CD4-positive, alpha-beta memory T cell (primary cell): ENCODE measurements at regions of chrX and their contacts with region 1.

Region 1: DNA sequence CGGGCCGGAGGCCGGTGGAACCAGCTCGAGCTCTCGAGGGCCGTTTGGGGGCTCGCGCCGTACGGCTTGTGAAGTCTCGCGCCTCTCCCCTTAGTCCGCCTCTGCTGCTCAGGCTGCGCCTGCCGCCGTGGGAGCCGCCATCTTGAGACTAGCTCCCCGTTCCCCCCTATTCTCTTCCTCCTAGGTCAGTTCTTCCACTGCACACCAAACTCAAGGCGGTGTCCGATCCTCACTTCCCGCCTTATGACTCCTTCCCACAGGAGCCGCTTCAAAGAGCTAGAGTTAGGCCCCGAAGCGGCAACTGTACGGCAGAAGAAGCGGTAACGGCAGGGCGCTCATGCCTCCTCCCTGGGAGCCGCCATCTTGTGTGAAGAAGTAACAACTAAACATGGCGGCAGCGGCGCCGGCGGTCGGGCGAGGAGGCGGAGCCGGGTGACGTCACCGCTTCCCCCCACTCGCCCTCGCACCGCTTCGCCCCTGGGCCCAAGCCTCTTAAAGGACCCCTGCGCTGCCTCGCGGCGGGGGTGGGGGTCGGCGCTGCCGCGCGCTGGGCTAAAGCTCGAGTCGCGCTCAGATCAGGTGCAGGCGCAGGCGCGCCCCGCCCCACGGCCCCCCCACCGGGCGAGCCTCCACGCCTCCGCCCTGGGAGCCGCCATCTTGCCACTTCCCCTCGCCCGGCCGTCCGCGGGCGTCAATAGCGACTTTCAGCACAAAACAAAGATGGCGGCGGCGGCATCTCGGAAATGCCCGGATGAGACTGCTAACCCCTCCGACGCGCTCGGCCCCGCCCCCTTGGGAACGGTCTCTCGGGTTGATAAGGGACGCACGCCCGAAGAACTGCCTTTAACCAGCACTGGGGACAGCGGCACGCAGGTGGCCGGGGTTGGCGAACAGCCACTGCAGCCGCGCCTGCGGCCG is at the start of gene HCFC1:
- DNase-seq: peak; percentile 93 to 98 (median 96)
- H3K4me3 ChIP-seq: peak within 1 kb of the TSS; percentile 61 to 90
- H3K4me3 Mint-ChIP-seq: peak within 1 kb of the TSS; percentile 100
- H3K27ac ChIP-seq: peak within 1 kb of the TSS; percentile 99
- H3K27ac Mint-ChIP-seq: peak within 1 kb of the TSS; percentile 97 to 100 (median 100)
- H3K4me1 ChIP-seq: peaks cover 41% of the 10 kb centered on the region
- H3K4me1 Mint-ChIP-seq: peaks cover 21 to 53% (median 41%) of the 10 kb centered on the region in 4 donors
- H3K27me3 ChIP-seq: no peaks in the 10 kb centered on the region
- H3K27me3 Mint-ChIP-seq: peaks cover 0 to 1% of the 10 kb centered on the region in 2 donors
- total RNA-seq, gene HCFC1: 52.6 to 53.4 TPM

Region 2: GRCh38 chrX:153319295-153320046 is 652.2 kb before region 1 on chrX:
- CTCF ChIA-PET with region 1: no interaction called
- POLR2A ChIA-PET with region 1: no interaction called
- intact Hi-C with region 1: no loop called
- DNase-seq: no peak
- H3K4me3 ChIP-seq: no peak overlapping the region
- H3K4me3 Mint-ChIP-seq: no peak overlapping the region
- H3K27ac ChIP-seq: no peak overlapping the region
- H3K27ac Mint-ChIP-seq: no peak overlapping the region
- H3K4me1 ChIP-seq: peaks cover 4% of the 10 kb centered on the region
- H3K4me1 Mint-ChIP-seq: peaks cover 3 to 7% (median 6%) of the 10 kb centered on the region in 4 donors
- H3K27me3 ChIP-seq: no peaks in the 10 kb centered on the region
- H3K27me3 Mint-ChIP-seq: peaks cover 0 to 1% of the 10 kb centered on the region in 2 donors

Region 3: GRCh38 chrX:153470435-153471363 is 501.0 kb before region 1 on chrX and contains the start of gene HAUS7:
- CTCF ChIA-PET with region 1: no interaction called
- POLR2A ChIA-PET with region 1: no interaction called
- intact Hi-C with region 1: no loop called
- DNase-seq: peak; percentile 84 to 89 (median 87)
- H3K4me3 ChIP-seq: peak within 1 kb of the TSS; percentile 42 to 69
- H3K4me3 Mint-ChIP-seq: peak within 1 kb of the TSS; percentile 80 to 87 (median 83)
- H3K27ac ChIP-seq: peak within 1 kb of the TSS; percentile 59
- H3K27ac Mint-ChIP-seq: peak within 1 kb of the TSS; percentile 59 to 89 (median 82)
- H3K4me1 ChIP-seq: peaks cover 31% of the 10 kb centered on the region
- H3K4me1 Mint-ChIP-seq: peaks cover 6 to 21% (median 15%) of the 10 kb centered on the region in 4 donors
- H3K27me3 ChIP-seq: no peaks in the 10 kb centered on the region
- H3K27me3 Mint-ChIP-seq: no peaks in the 10 kb centered on the region
- total RNA-seq, gene HAUS7: 29.8 to 33.8 TPM

Region 4: GRCh38 chrX:153927922-153928760 is 43.6 kb before region 1 on chrX:
- CTCF ChIA-PET with region 1: interaction called, 16 read pairs
- POLR2A ChIA-PET with region 1: interaction called, 176 read pairs
- intact Hi-C with region 1: loop called (anchors 1 kb)
- DNase-seq: peak; percentile 95 to 99 (median 97)
- H3K4me3 ChIP-seq: peak overlapping the region; percentile 17 to 72
- H3K4me3 Mint-ChIP-seq: peak overlapping the region; percentile 89 to 95 (median 92)
- H3K27ac ChIP-seq: peak overlapping the region; percentile 98
- H3K27ac Mint-ChIP-seq: peak overlapping the region; percentile 98 to 99 (median 99)
- H3K4me1 ChIP-seq: peaks cover 19% of the 10 kb centered on the region
- H3K4me1 Mint-ChIP-seq: peaks cover 6 to 66% (median 48%) of the 10 kb centered on the region in 4 donors
- H3K27me3 ChIP-seq: no peaks in the 10 kb centered on the region
- H3K27me3 Mint-ChIP-seq: no peaks in the 10 kb centered on the region

Region 5: GRCh38 chrX:153953342-153953830 is 18.3 kb before region 1 on chrX:
- CTCF ChIA-PET with region 1: interaction called, 31 read pairs
- POLR2A ChIA-PET with region 1: interaction called, 10 read pairs
- intact Hi-C with region 1: no loop called
- DNase-seq: peak; percentile 76 to 82 (median 78)
- H3K4me3 ChIP-seq: no peak overlapping the region
- H3K4me3 Mint-ChIP-seq: peak overlapping the region in 1 of 8 donors; percentile 43
- H3K27ac ChIP-seq: peak overlapping the region; percentile 31
- H3K27ac Mint-ChIP-seq: peak overlapping the region in 6 of 7 donors; percentile 57 to 84 (median 74)
- H3K4me1 ChIP-seq: peaks cover 4% of the 10 kb centered on the region
- H3K4me1 Mint-ChIP-seq: peaks cover 0 to 7% (median 2%) of the 10 kb centered on the region in 4 donors
- H3K27me3 ChIP-seq: no peaks in the 10 kb centered on the region
- H3K27me3 Mint-ChIP-seq: no peaks in the 10 kb centered on the region

Region 6: DNA sequence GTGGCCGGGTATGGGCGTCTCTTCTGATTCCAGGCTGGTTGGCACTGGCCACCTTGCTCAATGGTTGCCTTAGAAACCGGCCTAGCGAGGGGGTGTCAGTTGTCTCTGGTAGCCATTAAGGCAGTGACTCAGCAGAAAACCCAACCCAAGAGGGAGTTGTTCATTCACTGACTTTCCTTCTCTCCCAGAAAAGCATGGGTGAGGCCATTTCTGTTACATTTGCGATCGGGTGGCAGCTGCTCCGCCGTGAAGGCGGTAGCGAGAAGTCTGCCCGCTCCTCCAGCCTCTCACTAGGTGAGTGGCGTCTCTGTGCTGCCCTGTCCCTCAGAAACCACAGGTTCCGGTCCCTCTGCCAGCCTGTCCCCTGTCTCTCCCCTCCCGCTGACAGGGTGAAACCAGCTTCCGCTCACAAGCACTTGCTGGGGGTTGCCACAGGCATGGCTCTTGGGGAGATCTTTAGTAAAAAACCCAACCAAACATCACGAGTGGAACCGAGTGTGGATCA is 30.6 kb after region 1 on chrX:
- CTCF ChIA-PET with region 1: no interaction called
- POLR2A ChIA-PET with region 1: interaction called, 12 read pairs
- intact Hi-C with region 1: no loop called
- DNase-seq: peak; percentile 26 to 64 (median 39)
- H3K4me3 ChIP-seq: peak overlapping the region in 1 of 2 donors; percentile 40
- H3K4me3 Mint-ChIP-seq: peak overlapping the region; percentile 67 to 88 (median 79)
- H3K27ac ChIP-seq: no peak overlapping the region
- H3K27ac Mint-ChIP-seq: peak overlapping the region; percentile 43 to 92 (median 79)
- H3K4me1 ChIP-seq: peaks cover 15% of the 10 kb centered on the region
- H3K4me1 Mint-ChIP-seq: peaks cover 10 to 18% (median 13%) of the 10 kb centered on the region in 4 donors
- H3K27me3 ChIP-seq: no peaks in the 10 kb centered on the region
- H3K27me3 Mint-ChIP-seq: no peaks in the 10 kb centered on the region

Region 7: DNA sequence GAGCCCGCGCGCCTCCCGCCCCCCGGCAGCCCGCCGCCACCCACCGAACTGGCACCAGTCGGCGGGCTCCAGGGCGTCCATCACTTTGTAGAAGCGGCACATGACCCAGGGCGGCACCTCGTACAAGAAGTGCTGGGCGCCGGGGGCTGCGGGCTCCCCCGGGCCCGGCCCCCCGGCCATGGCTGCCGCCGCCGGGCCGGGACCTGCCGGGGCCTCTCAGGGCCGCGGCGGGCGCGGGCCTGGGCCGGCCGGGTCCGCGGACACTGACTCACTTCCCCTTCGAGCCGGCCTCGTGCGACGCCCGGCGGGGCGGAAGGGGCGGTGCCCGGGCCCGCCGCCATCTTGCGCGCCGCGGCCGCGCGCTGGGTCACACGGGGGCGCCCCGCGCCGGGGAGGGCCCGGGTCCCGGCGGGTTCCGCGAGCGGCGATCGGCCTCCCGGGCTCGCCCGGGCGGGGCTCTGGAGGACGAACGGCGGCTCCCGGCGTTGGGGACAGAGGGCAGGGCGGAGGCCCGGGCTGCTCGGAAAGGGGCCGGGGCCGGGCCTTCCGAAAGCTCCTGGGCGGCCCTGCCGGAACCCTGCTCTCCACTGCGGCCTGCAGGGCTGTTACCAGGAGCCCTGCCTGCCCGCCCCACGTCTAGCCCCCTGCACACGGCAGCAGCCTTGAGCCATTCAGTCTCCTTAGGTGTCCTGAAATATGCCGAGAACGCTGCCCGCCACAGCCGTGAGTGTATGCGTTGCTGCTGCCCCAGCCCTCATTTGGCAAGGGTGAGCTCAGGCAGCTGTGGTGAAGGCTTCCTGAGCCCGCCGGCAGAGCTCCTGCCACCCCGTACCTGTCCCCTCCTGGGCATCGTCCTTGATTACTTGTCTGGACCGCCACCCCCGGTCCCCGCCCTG is 48.2 kb after region 1 on chrX and contains the start of gene IRAK1:
- CTCF ChIA-PET with region 1: interaction called, 4 read pairs
- POLR2A ChIA-PET with region 1: interaction called, 61 read pairs
- intact Hi-C with region 1: loop called (anchors 2 kb)
- DNase-seq: peak; percentile 36 to 62 (median 54)
- H3K4me3 ChIP-seq: peak within 1 kb of the TSS; percentile 28 to 60
- H3K4me3 Mint-ChIP-seq: peak within 1 kb of the TSS; percentile 86 to 93 (median 89)
- H3K27ac ChIP-seq: peak within 1 kb of the TSS; percentile 78
- H3K27ac Mint-ChIP-seq: peak within 1 kb of the TSS; percentile 91 to 95 (median 94)
- H3K4me1 ChIP-seq: peaks cover 18% of the 10 kb centered on the region
- H3K4me1 Mint-ChIP-seq: peaks cover 3 to 29% (median 15%) of the 10 kb centered on the region in 4 donors
- H3K27me3 ChIP-seq: no peaks in the 10 kb centered on the region
- H3K27me3 Mint-ChIP-seq: no peaks in the 10 kb centered on the region
- total RNA-seq, gene IRAK1: 66.9 to 74.5 TPM

Region 8: DNA sequence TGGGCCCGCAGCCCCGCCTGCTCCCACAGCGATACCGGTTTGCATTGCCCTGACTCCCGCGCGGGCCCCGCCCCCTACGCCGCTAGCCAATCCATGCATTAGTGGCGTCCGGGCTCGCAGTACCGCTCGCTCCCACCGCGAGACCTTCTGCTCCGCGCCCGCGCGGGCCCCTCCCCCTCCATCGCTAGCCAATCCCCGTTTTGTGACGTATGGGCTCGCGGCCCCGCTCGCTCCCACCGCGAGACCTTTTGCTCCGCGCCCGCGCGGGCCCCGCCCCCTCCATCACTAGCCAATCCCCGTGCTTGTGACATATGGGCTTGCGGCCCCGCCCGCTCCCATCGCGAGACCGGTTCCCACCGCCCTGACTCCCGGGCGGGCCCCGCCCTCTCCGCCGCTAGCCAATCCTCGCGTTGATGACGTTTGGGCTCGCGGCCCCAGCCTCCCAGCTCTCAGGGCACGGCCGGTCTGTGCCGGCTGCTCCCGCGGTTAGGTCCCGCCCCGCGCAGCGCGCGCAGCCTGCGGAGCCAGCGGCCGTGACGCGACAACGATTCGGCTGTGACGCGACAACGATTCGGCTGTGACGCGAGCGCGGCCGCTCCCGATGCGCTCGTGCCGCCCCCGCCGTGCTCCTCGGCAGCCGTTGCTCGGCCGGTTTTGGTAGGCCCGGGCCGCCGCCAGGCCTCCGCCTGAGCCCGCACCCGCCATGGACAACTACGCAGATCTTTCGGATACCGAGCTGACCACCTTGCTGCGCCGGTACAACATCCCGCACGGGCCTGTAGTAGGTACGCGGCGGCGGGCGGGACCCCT is 407.3 kb after region 1 on chrX and contains the start of gene EMD:
- CTCF ChIA-PET with region 1: interaction called, 3 read pairs
- POLR2A ChIA-PET with region 1: interaction called, 4 read pairs
- intact Hi-C with region 1: loop called (anchors 10 kb)
- DNase-seq: peak; percentile 93 to 98 (median 97)
- H3K4me3 ChIP-seq: peak within 1 kb of the TSS; percentile 62 to 66
- H3K4me3 Mint-ChIP-seq: peak within 1 kb of the TSS; percentile 78 to 91 (median 83)
- H3K27ac ChIP-seq: peak within 1 kb of the TSS; percentile 99
- H3K27ac Mint-ChIP-seq: peak within 1 kb of the TSS; percentile 92 to 97 (median 95)
- H3K4me1 ChIP-seq: peaks cover 28% of the 10 kb centered on the region
- H3K4me1 Mint-ChIP-seq: peaks cover 4 to 23% (median 11%) of the 10 kb centered on the region in 4 donors
- H3K27me3 ChIP-seq: no peaks in the 10 kb centered on the region
- H3K27me3 Mint-ChIP-seq: no peaks in the 10 kb centered on the region
- total RNA-seq, gene EMD: 84.3 to 88.7 TPM